ENCODE measurements at regions of chr13 and their contacts with region 1.

Region 1: GRCh38 chr13:89115307-89115706 is 1444.1 kb downstream of the SLITRK5 start:
- DNase-seq: no peak
- ATAC-seq: no peak
- H3K4me3 ChIP-seq: no peak overlapping the region
- H3K27ac ChIP-seq: no peak overlapping the region
- H3K4me1 ChIP-seq: no peaks in the 10 kb centered on the region
- H3K27me3 ChIP-seq: no peaks in the 10 kb centered on the region
- CTCF ChIP-seq: peak; percentile 5

Region 2: DNA sequence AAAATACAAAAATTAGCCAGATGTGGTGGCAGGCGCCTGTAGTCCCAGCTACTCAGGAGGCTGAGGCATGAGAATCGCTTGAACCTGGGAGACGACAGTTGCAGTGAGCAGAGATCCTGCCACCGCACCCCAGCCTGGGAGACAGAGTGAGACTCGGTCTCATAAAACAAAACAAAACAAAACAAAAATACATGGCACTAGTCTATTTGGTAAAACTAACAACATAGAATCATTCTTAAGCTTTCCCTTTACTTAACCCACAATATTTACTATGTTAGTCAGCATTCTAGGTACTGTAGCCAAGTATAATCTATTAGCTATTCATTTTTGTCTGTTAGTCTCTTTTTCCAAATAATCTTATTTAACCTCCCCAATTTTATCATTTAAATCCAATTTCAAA is 38.6 kb after region 1 on chr13:
- intact Hi-C with region 1: loop called (anchors 2 kb)
- DNase-seq: no peak
- ATAC-seq: no peak
- H3K4me3 ChIP-seq: no peak overlapping the region
- H3K27ac ChIP-seq: no peak overlapping the region
- H3K4me1 ChIP-seq: no peaks in the 10 kb centered on the region
- H3K27me3 ChIP-seq: no peaks in the 10 kb centered on the region
- CTCF ChIP-seq: no peak

Region 3: DNA sequence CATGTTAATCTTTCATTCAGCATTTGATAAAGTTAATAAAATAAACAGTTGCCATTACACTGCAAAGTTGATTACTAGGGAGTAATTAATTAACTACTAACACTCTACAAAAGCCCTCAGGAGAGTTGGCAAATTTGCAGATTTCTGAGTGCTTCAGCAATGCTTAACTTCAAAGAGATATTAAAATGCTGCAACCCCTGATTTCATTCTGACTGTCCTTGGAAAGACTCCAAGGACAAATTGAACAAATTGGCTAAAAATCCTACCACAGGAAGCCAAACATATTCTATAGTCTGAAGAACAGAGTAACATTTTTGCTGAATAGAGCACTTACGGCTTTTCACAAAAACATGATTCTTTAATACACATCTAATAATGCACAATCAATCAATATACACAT is 98.9 kb after region 1 on chr13:
- intact Hi-C with region 1: no loop called
- DNase-seq: no peak
- ATAC-seq: peak; percentile 41
- H3K4me3 ChIP-seq: no peak overlapping the region
- H3K27ac ChIP-seq: no peak overlapping the region
- H3K4me1 ChIP-seq: no peaks in the 10 kb centered on the region
- H3K27me3 ChIP-seq: no peaks in the 10 kb centered on the region
- CTCF ChIP-seq: no peak

Measured in upper lobe of right lung (tissue), 1 donor.